ENCODE measurements at regions of chr11 and their contacts with region 1.

Region 1: GRCh38 chr11:47766305-47767227 is 575 bp downstream of the FNBP4 start:
- DNase-seq: peak; percentile 79
- ATAC-seq: peak; percentile 45

Region 2: GRCh38 chr11:47800759-47801158 is 34.2 kb after region 1 on chr11:
- intact Hi-C with region 1: loop called (anchors 5 kb)
- DNase-seq: no peak
- ATAC-seq: peak; percentile 93